Left cardiac atrium (tissue), 4 donors: ENCODE measurements at regions of chr20 and their contacts with region 1.

Region 1: GRCh38 chr20:10553326-10553984 is 118.3 kb downstream of the SLX4IP start:
- DNase-seq: peak; percentile 75
- ATAC-seq: peak; percentile 70 to 75

Region 2: DNA sequence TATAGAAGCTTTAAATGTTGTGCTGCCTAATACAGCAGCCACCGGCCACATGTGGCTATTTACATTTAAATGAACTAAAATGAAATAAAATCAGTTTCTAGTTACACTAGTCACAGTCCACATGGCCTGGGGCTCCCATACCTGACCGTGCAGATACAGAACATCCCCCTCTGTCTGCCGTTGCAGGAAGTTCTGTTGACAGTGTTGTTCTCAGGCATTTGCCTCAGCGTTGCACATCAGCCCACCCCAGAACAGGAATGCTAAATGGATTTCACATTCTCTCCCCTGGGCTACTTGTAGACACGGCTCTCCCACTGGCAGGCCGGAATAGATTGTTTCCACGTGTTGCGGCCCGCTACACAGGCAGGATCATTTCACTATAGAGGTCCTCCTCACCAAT is 94.0 kb after region 1 on chr20:
- intact Hi-C with region 1: loop called in 1 of 2 experiments (anchors 5 kb)
- DNase-seq: no peak
- ATAC-seq: no peak

Region 3: GRCh38 chr20:11204926-11205768 is 651.7 kb after region 1 on chr20:
- intact Hi-C with region 1: loop called in 1 of 2 experiments (anchors 2 kb)
- DNase-seq: peak; percentile 69
- ATAC-seq: peak; percentile 86 to 92

Region 4: DNA sequence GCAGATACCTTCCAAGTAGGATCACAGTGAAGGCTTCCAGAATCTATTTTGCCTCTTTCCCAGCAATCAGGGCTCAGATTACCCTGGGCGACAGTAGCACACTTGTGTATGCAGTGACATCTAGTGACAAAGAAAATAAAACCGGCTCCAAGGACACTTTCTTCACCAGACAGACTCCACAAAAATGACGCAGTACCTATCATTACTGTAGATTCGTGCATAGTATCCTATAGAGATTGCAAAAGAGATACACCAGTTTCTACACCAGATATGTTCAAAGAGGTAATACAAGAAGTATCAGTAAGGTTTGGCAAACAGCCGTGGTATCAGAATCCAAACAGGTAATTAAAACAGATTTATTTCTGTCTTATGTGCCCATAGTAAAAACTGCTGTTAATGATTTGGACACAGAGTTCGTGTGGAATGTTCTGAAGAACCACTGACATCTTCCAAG is 720.7 kb after region 1 on chr20:
- intact Hi-C with region 1: loop called (anchors 1 to 5 kb)
- DNase-seq: peak; percentile 25
- ATAC-seq: peak; percentile 89 to 90